ENCODE measurements at regions of chr9 and their contacts with region 1.

Region 1: DNA sequence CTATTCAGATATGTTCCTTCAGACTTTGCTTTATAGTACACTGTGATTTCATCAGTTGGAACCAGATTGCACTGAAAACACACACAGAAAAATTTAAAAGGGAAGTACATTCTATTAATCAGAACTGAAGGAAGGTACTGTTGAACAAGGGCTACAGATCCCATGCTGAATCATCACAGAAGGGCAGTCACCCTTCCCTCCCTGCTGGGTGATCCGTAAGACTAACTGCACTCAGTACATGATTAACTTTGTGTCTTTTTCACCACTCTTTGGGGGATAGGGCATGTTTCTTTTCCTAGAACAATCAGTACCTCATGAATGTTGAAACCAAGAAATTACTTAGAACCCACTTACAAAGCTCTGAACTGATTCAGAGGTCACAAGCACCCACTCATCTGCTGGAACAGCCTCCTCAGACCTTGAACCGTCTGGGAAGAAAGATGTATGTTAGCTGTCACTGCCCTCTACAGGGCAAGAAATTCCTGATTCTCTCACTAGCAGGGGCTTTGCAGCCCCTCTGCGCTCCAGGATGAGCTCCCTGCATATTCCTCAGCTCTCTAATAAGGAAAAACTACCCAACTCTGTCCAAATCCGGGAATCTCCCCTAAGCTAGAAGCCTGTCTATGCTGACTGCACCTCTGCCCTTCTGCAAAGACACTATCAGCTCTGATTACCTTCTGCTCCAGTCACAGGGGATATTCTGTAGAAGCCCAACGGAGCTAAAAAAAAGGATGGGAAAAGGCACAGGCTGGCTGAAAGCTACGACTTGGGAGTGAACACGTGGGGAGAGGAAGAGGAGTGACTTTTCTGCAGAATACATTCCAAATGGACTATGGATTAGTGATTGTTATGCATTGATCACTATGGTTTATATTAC is 51.0 kb downstream of the IARS1 start:
- DNase-seq: no peak
- H3K4me3 Mint-ChIP-seq: no peak overlapping the region
- H3K27ac Mint-ChIP-seq: no peak overlapping the region
- H3K4me1 Mint-ChIP-seq: peaks cover 5% of the 10 kb centered on the region
- H3K27me3 Mint-ChIP-seq: no peaks in the 10 kb centered on the region

Region 2: GRCh38 chr9:92276331-92277032 is 34.0 kb after region 1 on chr9:
- CTCF ChIA-PET with region 1: no interaction called
- intact Hi-C with region 1: loop called (anchors 5 kb)
- DNase-seq: no peak
- H3K4me3 Mint-ChIP-seq: no peak overlapping the region
- H3K27ac Mint-ChIP-seq: peak overlapping the region; percentile 54
- H3K4me1 Mint-ChIP-seq: peaks cover 38% of the 10 kb centered on the region
- H3K27me3 Mint-ChIP-seq: no peaks in the 10 kb centered on the region

Measured in activated naive CD4-positive, alpha-beta T cell treated with anti-CD3 and anti-CD28 coated beads for 36 hours (primary cell).